CD4-positive, alpha-beta memory T cell (primary cell): ENCODE measurements at regions of chr6 and their contacts with region 1.

Region 1: GRCh38 chr6:149190224-149190831 is 127.2 kb upstream of the TAB2 start:
- DNase-seq: peak; percentile 23 to 48 (median 32)
- H3K4me3 ChIP-seq: no peak overlapping the region
- H3K4me3 Mint-ChIP-seq: no peak overlapping the region
- H3K27ac ChIP-seq: no peak overlapping the region
- H3K27ac Mint-ChIP-seq: peak overlapping the region in 4 of 7 donors; percentile 14 to 77 (median 36)
- H3K4me1 ChIP-seq: peaks cover 16% of the 10 kb centered on the region
- H3K4me1 Mint-ChIP-seq: peaks cover 20 to 33% (median 24%) of the 10 kb centered on the region in 4 donors
- H3K27me3 ChIP-seq: no peaks in the 10 kb centered on the region
- H3K27me3 Mint-ChIP-seq: no peaks in the 10 kb centered on the region

Region 2: DNA sequence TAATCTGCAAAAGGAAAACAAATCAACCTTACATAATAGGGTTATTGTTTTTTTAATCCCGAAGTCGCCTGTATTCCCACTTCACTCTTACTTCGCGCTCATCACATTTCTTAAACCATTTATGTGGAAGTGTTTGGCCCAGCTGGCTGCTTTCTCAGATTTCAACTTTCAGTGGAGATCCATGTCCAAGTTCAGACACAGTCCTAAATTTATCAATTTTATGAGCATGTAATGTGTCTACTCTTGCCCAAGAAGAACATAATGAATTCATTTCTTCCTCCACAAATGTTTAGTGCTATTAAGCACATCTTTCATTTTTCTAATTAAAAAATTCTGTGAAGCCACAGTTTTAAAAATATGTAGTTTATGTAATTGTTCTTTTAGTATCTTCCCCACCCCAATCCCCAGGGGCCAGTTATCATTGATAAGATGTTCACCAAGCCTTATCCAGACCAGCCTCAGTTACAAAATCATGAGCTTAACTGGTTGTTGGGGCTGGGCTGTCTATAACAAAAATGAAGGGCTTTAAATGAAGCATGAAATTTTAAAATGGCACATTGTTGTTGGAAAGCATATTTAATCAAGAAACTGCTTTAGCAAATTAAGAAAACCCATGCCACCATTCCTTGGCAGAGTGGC is 291.8 kb before region 1 on chr6:
- CTCF ChIA-PET with region 1: no interaction called
- POLR2A ChIA-PET with region 1: no interaction called
- intact Hi-C with region 1: no loop called
- DNase-seq: no peak
- H3K4me3 ChIP-seq: no peak overlapping the region
- H3K4me3 Mint-ChIP-seq: no peak overlapping the region
- H3K27ac ChIP-seq: no peak overlapping the region
- H3K27ac Mint-ChIP-seq: no peak overlapping the region
- H3K4me1 ChIP-seq: no peaks in the 10 kb centered on the region
- H3K4me1 Mint-ChIP-seq: peaks cover 0 to 7% (median 1%) of the 10 kb centered on the region in 4 donors
- H3K27me3 ChIP-seq: no peaks in the 10 kb centered on the region
- H3K27me3 Mint-ChIP-seq: no peaks in the 10 kb centered on the region

Region 3: DNA sequence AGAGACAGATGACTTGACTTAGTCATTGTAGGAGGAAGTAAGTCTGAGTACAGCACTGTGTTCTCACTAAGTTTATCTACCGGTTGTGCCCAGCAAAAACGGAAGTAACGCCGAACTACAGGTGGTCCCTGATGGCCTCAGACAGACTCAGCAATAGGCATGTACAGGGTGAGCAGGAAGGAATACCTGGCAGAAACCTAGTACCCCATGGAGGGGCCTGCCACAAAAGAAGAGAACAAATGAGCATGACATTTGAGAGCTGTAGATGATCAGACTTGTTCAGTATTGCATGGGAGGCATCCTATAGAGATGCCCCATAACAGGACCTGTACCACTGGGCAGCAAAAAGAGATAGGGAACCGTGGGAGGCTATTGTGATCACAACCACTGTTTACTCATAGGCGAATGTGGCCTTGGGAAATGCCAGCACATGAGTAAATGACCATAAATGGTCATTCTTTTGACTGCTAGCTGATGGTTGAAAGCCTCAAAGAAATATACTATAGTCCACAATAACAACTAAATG is 20.8 kb after region 1 on chr6:
- CTCF ChIA-PET with region 1: no interaction called
- POLR2A ChIA-PET with region 1: interaction called, 21 read pairs
- intact Hi-C with region 1: no loop called
- DNase-seq: no peak
- H3K4me3 ChIP-seq: no peak overlapping the region
- H3K4me3 Mint-ChIP-seq: peak overlapping the region in 7 of 8 donors; percentile 48 to 67 (median 52)
- H3K27ac ChIP-seq: no peak overlapping the region
- H3K27ac Mint-ChIP-seq: peak overlapping the region in 6 of 7 donors; percentile 65 to 89 (median 80)
- H3K4me1 ChIP-seq: peaks cover 49% of the 10 kb centered on the region
- H3K4me1 Mint-ChIP-seq: peaks cover 0 to 26% (median 16%) of the 10 kb centered on the region in 4 donors
- H3K27me3 ChIP-seq: no peaks in the 10 kb centered on the region
- H3K27me3 Mint-ChIP-seq: no peaks in the 10 kb centered on the region